H1 (cell line): ENCODE measurements at regions of chr19 and their contacts with region 1.

Region 1: GRCh38 chr19:15115111-15116053 is 8.2 kb downstream of the SYDE1 start:
- DNase-seq: no peak
- H3K4me3 ChIP-seq: no peak overlapping the region
- H3K27ac ChIP-seq: no peak overlapping the region
- H3K4me1 ChIP-seq: no peaks in the 10 kb centered on the region
- H3K27me3 ChIP-seq: no peaks in the 10 kb centered on the region
- CTCF ChIP-seq: no peak
- EP300 ChIP-seq: no peak
- POLR2A ChIP-seq: peak in 1 of 2 experiments; percentile 52; a peak in 1 of 3 replicates
- RAD21 ChIP-seq: no peak

Region 2: GRCh38 chr19:15101479-15102082 is 13.8 kb before region 1 on chr19:
- CTCF ChIA-PET with region 1: interaction called, 37 read pairs
- POLR2A ChIA-PET with region 1: interaction called, 52 read pairs
- DNase-seq: peak in 1 of 2 experiments; percentile 87
- H3K4me3 ChIP-seq: no peak overlapping the region
- H3K27ac ChIP-seq: no peak overlapping the region
- H3K4me1 ChIP-seq: no peaks in the 10 kb centered on the region
- H3K27me3 ChIP-seq: no peaks in the 10 kb centered on the region
- CTCF ChIP-seq: peak; percentile 56 to 87 (median 74)
- EP300 ChIP-seq: no peak
- POLR2A ChIP-seq: no peak
- RAD21 ChIP-seq: peak; percentile 67 to 68

Region 3: DNA sequence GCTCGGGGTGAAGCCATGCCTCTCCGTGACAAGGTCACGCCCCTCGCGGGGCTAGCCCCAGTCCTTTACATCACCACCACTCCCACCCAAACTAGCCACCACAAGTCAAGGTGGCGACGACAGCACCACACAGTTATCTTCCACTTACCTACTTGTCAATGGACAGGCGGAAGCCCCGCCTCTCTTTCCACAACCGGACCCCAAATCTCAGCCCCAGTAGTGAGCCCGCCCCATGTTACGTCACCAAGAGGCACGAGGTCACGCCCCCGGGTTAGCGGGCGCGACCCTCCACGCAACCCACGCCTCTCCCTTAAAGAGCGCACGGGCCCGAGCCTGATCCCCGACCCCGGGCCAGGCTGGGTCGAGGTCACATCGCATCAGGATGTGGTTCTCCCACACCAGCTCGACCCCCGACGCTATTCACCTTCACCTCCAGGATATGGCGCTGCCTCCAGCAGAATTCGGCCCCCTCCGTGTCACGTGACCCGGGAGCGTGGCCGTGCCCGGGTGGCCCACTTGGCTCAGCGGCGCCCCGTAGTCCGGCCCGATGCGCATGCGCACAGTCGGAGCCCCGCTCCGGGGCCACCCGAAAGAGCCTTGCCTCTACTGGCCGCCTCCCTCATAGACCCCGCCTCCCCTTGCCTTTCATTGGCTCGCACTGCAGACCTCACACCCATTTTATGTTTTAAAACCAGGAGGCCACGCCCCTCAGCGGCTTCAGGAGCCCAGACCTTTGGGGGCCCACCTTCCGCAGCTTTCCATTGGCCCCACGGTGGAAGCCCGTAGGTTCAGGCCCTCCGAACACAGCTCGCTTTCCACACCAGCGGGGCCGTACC is 10.1 kb after region 1 on chr19:
- CTCF ChIA-PET with region 1: interaction called, 9 read pairs
- POLR2A ChIA-PET with region 1: interaction called, 67 read pairs
- DNase-seq: peak; percentile 97 to 98
- H3K4me3 ChIP-seq: peak overlapping the region; percentile 68 to 90 (median 82)
- H3K27ac ChIP-seq: peak overlapping the region; percentile 96
- H3K4me1 ChIP-seq: peaks cover 0 to 9% (median 2%) of the 10 kb centered on the region in 4 experiments; a peak in 5 of 7 replicates
- H3K27me3 ChIP-seq: no peaks in the 10 kb centered on the region
- CTCF ChIP-seq: no peak
- EP300 ChIP-seq: no peak
- POLR2A ChIP-seq: peak; percentile 58 to 88
- RAD21 ChIP-seq: 0 out of 4 replicates have a peak, but pooled peaks of 1 of the 2 experiments have one; percentile 1